OCI-LY7 (cell line): ENCODE measurements at regions of chr19 and their contacts with region 1.

Region 1: GRCh38 chr19:47514869-47515588 is at the start of gene NAPA:
- DNase-seq: peak; percentile 100
- H3K4me3 ChIP-seq: peak within 1 kb of the TSS; percentile 82
- H3K27ac ChIP-seq: peak within 1 kb of the TSS; percentile 85
- H3K4me1 ChIP-seq: peaks cover 76% of the 10 kb centered on the region
- CTCF ChIP-seq: no peak
- total RNA-seq, gene NAPA: 54.7 and 71.4 TPM in 2 replicates

Region 2: DNA sequence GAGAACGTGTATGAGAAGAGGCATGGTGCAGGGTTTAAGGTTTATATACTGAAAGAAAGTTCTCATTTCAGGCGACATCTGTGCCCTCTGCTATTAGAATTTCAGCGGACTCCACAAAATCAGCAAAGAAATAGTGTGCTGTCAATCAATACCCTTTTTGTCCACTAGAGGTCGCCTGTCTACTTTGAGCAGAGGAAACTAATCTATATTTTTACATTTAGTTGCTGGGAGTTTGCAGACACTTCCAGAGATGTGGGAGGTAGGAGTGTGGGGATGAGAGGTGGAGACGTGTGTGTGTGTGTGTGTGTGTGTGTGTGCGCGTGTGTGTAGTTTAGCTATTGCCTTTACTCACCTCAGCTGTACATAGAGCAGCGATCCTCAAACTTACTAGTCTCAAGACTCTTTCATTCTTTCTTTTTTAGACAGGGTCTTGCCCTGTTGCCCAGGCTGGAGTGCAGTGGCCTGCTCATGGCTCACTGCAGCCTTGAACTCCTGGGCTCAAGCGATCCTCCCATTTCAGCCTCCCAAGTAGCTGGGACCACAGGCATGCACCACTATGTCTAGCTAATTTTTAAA is 230.6 kb before region 1 on chr19:
- CTCF ChIA-PET with region 1: no interaction called
- POLR2A ChIA-PET with region 1: no interaction called
- intact Hi-C with region 1: loop called (anchors 5 kb)
- DNase-seq: peak; percentile 68
- H3K4me3 ChIP-seq: no peak overlapping the region
- H3K27ac ChIP-seq: no peak overlapping the region
- H3K4me1 ChIP-seq: peaks cover 31% of the 10 kb centered on the region
- CTCF ChIP-seq: peak; percentile 97

Region 3: GRCh38 chr19:47436712-47437401 is 78.2 kb before region 1 on chr19:
- CTCF ChIA-PET with region 1: interaction called, 3 read pairs
- POLR2A ChIA-PET with region 1: no interaction called
- intact Hi-C with region 1: loop called (anchors 2 kb)
- DNase-seq: peak; percentile 80
- H3K4me3 ChIP-seq: no peak overlapping the region
- H3K27ac ChIP-seq: no peak overlapping the region
- H3K4me1 ChIP-seq: peaks cover 14% of the 10 kb centered on the region
- CTCF ChIP-seq: peak; percentile 94

Region 4: GRCh38 chr19:47483800-47484690 is 31.0 kb before region 1 on chr19 and contains the start of gene KPTN:
- CTCF ChIA-PET with region 1: no interaction called
- POLR2A ChIA-PET with region 1: interaction called, 3 read pairs
- intact Hi-C with region 1: loop called (anchors 1 kb)
- DNase-seq: peak; percentile 94
- H3K4me3 ChIP-seq: peak within 1 kb of the TSS; percentile 77
- H3K27ac ChIP-seq: peak within 1 kb of the TSS; percentile 91
- H3K4me1 ChIP-seq: peaks cover 40% of the 10 kb centered on the region
- CTCF ChIP-seq: peak; percentile 97
- total RNA-seq, gene KPTN: 13.8 and 14.0 TPM in 2 replicates

Region 5: DNA sequence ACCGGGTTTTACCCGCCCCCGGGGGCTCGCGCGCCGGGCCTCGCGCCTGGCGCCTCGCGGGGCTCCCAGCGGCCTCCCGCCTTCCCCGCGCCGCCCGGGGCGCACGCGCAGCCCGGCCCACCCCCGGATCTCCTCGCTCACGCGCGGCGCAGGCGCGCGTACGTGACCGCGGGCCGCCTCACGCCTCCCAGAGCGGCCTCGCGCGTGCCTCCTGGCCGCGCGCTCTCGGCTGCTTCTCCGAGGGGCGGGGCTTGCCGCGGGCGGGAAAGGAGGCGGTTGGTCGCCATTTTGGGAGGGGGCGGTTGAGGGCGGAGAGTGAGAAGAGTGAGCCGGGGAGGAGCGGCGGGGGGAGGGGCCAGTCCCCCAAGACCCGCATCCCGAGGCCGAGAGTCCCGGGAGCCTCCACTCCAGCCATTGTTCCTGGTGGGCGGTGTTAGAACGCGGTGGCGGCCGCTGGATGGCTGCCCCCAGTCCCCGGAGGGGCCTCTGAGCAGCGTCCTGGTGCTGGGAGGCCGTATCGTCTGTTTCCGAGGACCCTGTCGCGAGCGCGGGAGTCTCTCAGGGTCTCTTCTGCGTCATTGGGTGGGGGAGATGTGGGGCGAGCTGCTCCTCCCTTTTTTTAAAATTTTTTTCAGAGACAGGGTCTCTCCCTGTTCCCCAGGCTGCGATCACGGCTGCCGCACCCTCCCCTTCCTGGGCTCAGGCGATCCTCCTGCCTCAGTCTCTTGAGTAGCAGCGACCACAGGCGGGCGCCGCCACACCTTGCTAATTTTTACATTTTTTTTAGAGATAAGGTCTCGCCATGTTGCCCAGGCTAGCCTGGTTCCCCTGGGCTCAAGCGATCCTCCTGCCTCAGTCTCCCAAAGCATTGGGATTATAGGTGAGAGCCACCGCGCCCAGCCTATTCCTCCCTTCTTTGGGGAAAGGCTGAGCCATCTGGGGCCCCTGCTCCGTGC is 58.3 kb after region 1 on chr19 and contains the start of gene ZNF541:
- CTCF ChIA-PET with region 1: no interaction called
- POLR2A ChIA-PET with region 1: no interaction called
- intact Hi-C with region 1: no loop called
- DNase-seq: no peak
- H3K4me3 ChIP-seq: no peak within 1 kb of the TSS
- H3K27ac ChIP-seq: no peak within 1 kb of the TSS
- H3K4me1 ChIP-seq: peaks cover 41% of the 10 kb centered on the region
- CTCF ChIP-seq: no peak
- total RNA-seq, gene ZNF541: not detected in 2 replicates

Region 6: GRCh38 chr19:47600246-47601179 is 85.5 kb after region 1 on chr19:
- CTCF ChIA-PET with region 1: no interaction called
- POLR2A ChIA-PET with region 1: interaction called, 3 read pairs
- intact Hi-C with region 1: loop called (anchors 1 kb)
- DNase-seq: peak; percentile 100
- H3K4me3 ChIP-seq: peak overlapping the region; percentile 72
- H3K27ac ChIP-seq: peak overlapping the region; percentile 59
- H3K4me1 ChIP-seq: peaks cover 28% of the 10 kb centered on the region
- CTCF ChIP-seq: no peak

Region 7: DNA sequence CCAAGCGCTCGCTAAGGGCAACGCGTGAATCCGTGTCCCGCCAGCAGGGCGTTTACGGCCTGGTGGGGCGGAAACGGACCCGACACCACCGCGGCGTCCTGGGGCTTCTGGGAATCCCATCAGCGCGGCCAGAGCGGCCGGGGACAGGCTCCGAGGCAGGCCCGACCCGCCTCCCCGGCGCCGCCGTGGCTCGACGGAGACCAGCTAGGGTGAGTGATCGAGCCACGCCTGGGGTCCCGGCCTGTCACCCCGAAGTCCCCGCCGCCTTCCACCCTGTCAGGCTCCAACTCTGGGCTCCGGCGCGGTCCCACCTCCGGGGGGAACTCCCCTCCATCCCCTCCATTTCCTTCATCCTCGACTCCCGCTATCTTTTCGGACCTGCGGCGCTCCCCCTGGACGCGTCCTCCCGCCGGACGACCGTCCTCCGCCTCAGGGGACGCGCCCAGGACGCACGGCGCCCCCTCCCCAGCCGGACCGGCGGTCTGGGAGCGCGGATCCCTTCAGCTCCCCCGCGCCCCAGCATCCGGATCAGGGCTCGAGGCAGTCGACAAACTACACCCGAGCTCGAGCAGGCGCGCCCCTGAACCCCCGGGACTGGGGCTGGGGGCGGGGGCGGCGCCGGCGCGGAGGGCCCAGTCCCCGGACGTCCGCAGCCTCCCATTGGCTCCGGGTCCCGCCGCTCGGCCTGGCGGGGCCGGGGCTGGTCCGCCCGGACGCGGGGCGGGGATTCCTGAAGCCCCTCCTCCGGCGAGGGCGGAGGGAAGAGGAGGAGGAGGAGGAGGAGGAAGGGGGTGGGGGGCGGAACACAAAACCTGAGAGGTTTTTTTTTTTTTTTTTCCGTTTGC is 93.3 kb after region 1 on chr19:
- CTCF ChIA-PET with region 1: no interaction called
- POLR2A ChIA-PET with region 1: interaction called, 3 read pairs
- intact Hi-C with region 1: loop called (anchors 2 kb)
- DNase-seq: peak; percentile 95
- H3K4me3 ChIP-seq: peak overlapping the region; percentile 93
- H3K27ac ChIP-seq: peak overlapping the region; percentile 76
- H3K4me1 ChIP-seq: peaks cover 27% of the 10 kb centered on the region
- CTCF ChIP-seq: no peak; the same call in 1 of the 2 replicates

Region 8: DNA sequence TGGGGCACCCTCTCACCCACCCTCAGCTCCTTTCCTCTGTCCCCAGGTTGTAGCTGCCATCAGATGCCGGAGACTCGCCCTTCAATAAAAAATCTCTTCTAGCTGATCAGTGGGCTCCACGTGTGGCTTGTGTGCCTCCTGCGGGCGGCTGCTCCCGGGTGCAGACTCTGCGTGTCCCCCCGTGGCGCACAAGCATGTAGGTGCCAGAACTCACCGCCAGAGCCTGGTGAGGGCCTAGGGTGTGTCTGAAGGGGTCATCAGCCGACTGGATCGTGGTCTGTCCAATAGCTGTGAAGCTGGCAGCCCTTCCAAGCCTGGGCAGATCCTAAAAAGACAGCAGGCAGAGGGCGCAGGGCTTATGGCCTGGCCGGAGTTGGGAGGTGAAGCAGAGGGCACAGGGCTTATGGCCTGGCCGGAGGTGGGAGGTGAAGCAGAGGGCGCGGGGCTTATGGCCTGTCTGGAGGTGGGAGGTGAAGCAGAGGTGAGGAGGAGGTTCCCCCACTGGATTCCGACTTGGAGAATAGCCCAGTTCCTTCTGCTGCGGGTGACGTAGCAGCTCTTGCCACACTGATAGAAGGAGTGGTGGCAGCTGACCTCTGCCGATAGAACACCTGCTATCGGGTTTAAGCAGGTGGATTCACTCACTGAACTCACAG is 242.1 kb after region 1 on chr19:
- CTCF ChIA-PET with region 1: no interaction called
- POLR2A ChIA-PET with region 1: no interaction called
- intact Hi-C with region 1: no loop called
- DNase-seq: no peak
- H3K4me3 ChIP-seq: no peak overlapping the region
- H3K27ac ChIP-seq: no peak overlapping the region
- H3K4me1 ChIP-seq: no peaks in the 10 kb centered on the region
- CTCF ChIP-seq: no peak